H1 (cell line): ENCODE measurements at regions of chr2 and their contacts with region 1.

Region 1: GRCh38 chr2:188028739-188029138 is 262.9 kb upstream of the GULP1 start:
- DNase-seq: no peak
- H3K4me3 ChIP-seq: no peak overlapping the region
- H3K27ac ChIP-seq: 0 out of 2 replicates have a peak overlapping the region, but pooled peaks have one; percentile 22
- H3K4me1 ChIP-seq: peaks cover 5 to 22% (median 14%) of the 10 kb centered on the region in 4 experiments; a peak in 6 of 7 replicates
- H3K27me3 ChIP-seq: no peaks in the 10 kb centered on the region
- CTCF ChIP-seq: no peak
- EP300 ChIP-seq: no peak
- POLR2A ChIP-seq: no peak
- RAD21 ChIP-seq: no peak

Region 2: DNA sequence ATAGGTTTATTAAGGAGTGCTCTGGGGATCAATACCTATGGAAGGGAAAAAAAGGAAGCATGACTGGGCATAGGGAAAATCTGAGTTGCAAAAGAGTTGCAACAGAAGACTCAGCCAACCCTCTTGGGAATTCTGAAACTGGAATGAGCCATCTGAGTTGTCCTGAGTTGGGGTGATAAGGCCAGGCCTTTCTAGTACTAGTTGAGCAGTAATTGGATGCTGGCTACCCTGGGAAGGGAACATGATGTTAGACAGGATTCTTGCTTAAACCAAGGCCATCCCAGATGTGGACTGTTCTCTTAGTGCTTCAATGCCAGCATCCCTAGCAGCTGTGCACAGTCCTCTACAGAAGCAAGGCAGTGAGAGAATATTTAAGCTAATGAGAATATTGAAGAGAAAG is 85.9 kb before region 1 on chr2:
- CTCF ChIA-PET with region 1: no interaction called
- POLR2A ChIA-PET with region 1: no interaction called
- DNase-seq: no peak
- H3K4me3 ChIP-seq: no peak overlapping the region
- H3K27ac ChIP-seq: no peak overlapping the region
- H3K4me1 ChIP-seq: no peaks in the 10 kb centered on the region
- H3K27me3 ChIP-seq: no peaks in the 10 kb centered on the region
- CTCF ChIP-seq: no peak
- EP300 ChIP-seq: no peak
- POLR2A ChIP-seq: no peak
- RAD21 ChIP-seq: no peak

Region 3: DNA sequence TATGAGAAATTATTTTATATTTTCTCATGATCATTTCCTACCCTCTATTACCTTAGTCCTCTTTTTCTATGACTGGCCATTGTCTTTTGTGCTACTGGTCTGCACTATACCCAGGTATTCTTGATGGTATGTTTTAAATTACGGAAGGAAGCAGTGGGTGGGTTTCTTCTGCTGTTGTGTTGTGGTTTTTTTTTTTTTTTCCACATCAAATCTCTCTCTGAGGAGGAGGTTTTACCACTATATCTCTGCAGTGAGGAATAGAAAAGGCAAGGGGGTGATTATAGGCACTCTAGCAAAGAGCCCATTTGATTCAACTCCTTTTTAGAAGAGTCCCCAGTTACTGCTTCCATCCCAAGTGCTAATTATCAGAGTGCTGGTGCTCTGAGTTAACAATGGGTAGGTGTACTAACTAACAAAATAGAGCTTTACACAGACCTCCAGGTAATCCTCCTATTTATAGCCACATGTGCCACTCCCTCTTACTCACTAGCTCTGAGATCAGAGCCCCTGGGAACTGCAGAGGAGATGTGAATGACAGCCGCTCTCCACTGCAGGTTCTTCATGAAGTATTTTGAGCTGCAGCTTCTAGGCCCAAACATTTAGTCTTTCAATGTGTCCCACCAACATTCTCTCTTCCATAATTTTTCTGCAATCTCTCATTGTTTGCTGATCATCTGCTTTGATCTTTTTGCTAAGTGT is 38.7 kb before region 1 on chr2:
- CTCF ChIA-PET with region 1: no interaction called
- POLR2A ChIA-PET with region 1: interaction called, 12 read pairs
- DNase-seq: no peak
- H3K4me3 ChIP-seq: no peak overlapping the region
- H3K27ac ChIP-seq: no peak overlapping the region
- H3K4me1 ChIP-seq: peaks cover 0 to 27% (median 15%) of the 10 kb centered on the region in 4 experiments; a peak in 6 of 7 replicates
- H3K27me3 ChIP-seq: no peaks in the 10 kb centered on the region
- CTCF ChIP-seq: no peak
- EP300 ChIP-seq: no peak
- POLR2A ChIP-seq: no peak
- RAD21 ChIP-seq: no peak

Region 4: GRCh38 chr2:188039307-188039706 is 10.6 kb after region 1 on chr2:
- CTCF ChIA-PET with region 1: no interaction called
- POLR2A ChIA-PET with region 1: interaction called, 13 read pairs
- DNase-seq: no peak
- H3K4me3 ChIP-seq: no peak overlapping the region
- H3K27ac ChIP-seq: no peak overlapping the region
- H3K4me1 ChIP-seq: peaks cover 2 to 6% (median 3%) of the 10 kb centered on the region in 4 experiments; a peak in 4 of 7 replicates
- H3K27me3 ChIP-seq: no peaks in the 10 kb centered on the region
- CTCF ChIP-seq: no peak
- EP300 ChIP-seq: no peak
- POLR2A ChIP-seq: no peak
- RAD21 ChIP-seq: no peak